Left ventricle myocardium superior (tissue), 1 donor: ENCODE measurements at regions of chr17 and their contacts with region 1.

Region 1: GRCh38 chr17:42517516-42517915 is 18.5 kb upstream of the NAGLU start:
- DNase-seq: peak; percentile 93
- ATAC-seq: peak; percentile 62

Region 2: DNA sequence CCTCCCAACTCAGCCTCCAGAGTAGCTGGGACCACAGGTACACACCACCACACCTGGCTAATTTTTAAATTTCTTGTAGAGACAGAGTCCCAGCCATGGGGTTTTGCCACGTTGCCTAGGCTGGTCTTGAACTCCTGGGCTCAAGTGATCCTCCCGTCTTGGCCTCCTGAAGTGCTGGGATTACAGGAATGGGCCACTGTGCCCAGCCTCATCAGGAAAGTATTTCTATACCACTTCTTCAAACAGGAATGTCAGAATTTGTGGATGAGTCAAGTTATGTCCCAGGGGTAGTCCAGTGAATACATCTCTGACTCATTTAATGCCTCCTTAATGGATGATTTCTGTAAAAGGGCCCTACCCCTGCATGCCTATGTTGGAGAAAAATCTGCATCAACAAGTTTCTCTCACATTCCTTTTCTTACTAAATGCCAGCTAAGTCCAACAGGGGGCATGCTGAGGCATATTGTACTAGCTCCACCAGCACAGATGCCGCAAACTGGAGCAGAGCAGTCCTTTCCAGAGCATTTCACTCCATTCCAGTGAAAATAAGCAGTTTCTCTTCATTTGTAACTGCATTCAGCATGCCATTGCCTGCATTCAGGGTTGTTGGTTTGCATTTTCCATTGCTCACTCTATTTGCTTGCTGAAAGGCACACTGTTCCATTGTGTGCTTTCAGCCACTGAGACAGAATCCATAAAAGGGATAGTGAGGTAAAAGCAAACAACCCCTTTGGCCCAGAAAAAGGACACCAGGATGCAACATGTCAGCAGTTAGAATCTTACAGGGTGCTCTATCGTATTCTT is 89.2 kb before region 1 on chr17:
- intact Hi-C with region 1: loop called (anchors 10 kb)
- DNase-seq: peak; percentile 44
- ATAC-seq: peak; percentile 49